ENCODE measurements at regions of chr7 and their contacts with region 1.

Region 1: GRCh38 chr7:42522227-42522991 is 285.4 kb upstream of the GLI3 start:
- DNase-seq: no peak
- H3K4me3 ChIP-seq: no peak overlapping the region
- H3K27ac ChIP-seq: no peak overlapping the region
- H3K4me1 ChIP-seq: no peaks in the 10 kb centered on the region
- H3K27me3 ChIP-seq: 0 out of 2 replicates have a peak, but pooled peaks cover 11% of the 10 kb centered on the region
- CTCF ChIP-seq: no peak

Region 2: GRCh38 chr7:42537066-42537465 is 14.7 kb after region 1 on chr7:
- CTCF ChIA-PET with region 1: no interaction called
- POLR2A ChIA-PET with region 1: no interaction called
- intact Hi-C with region 1: loop called (anchors 1 kb)
- DNase-seq: no peak
- H3K4me3 ChIP-seq: no peak overlapping the region
- H3K27ac ChIP-seq: no peak overlapping the region
- H3K4me1 ChIP-seq: no peaks in the 10 kb centered on the region
- H3K27me3 ChIP-seq: no peaks in the 10 kb centered on the region
- CTCF ChIP-seq: no peak

Region 3: DNA sequence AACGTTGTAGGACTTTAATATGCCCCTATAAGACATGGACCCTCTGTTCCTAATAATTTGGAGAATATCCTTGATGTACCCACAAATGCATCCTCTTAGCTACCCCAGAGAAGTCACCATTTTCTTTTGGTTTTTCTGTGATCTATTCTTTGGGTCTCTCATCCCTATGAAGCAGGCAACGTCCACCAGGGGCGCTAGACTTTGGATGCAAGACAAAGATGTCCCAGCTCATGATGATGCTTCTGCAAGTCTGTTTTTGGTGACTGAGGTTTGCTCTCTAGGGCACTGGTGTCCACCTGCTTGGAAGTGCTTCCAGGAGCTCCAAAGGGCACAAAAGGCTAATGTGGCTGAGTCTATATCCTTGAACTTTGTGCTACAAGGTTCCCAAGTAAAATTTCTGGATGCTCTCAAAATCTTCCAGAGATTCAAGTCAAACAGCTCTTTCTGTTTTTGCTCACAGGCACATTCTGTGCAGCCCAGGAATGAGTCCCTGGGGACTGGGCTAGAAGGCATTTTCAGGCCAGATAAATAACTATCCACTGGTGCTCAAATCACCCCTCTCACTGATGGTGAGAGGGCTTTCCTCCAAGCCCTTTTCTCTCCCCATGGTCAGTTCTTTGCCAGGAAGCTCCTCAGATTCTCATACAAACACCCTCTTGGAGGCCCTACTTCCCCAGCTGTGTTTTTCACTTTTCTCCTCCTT is 223.1 kb after region 1 on chr7:
- CTCF ChIA-PET with region 1: no interaction called
- POLR2A ChIA-PET with region 1: no interaction called
- intact Hi-C with region 1: no loop called
- DNase-seq: peak in 1 of 2 experiments; percentile 4
- H3K4me3 ChIP-seq: no peak overlapping the region
- H3K27ac ChIP-seq: no peak overlapping the region
- H3K4me1 ChIP-seq: no peaks in the 10 kb centered on the region
- H3K27me3 ChIP-seq: no peaks in the 10 kb centered on the region
- CTCF ChIP-seq: peak; percentile 89